PC-3 (cell line): ENCODE measurements at regions of chr14 and their contacts with region 1.

Region 1: GRCh38 chr14:59126710-59127432 is 61.6 kb upstream of the DAAM1 start:
- DNase-seq: peak; percentile 95
- ATAC-seq: peak; percentile 94
- H3K4me3 ChIP-seq: no peak overlapping the region
- H3K27ac ChIP-seq: no peak overlapping the region
- H3K4me1 ChIP-seq: no peaks in the 10 kb centered on the region
- H3K27me3 ChIP-seq: peaks cover 4% of the 10 kb centered on the region; the same call in 1 of the 2 replicates
- CTCF ChIP-seq: peak; percentile 100

Region 2: GRCh38 chr14:58540749-58541632 is 585.9 kb before region 1 on chr14:
- CTCF ChIA-PET with region 1: no interaction called
- POLR2A ChIA-PET with region 1: no interaction called
- intact Hi-C with region 1: no loop called
- DNase-seq: peak; percentile 51
- ATAC-seq: peak; percentile 64
- H3K4me3 ChIP-seq: no peak overlapping the region
- H3K27ac ChIP-seq: peak overlapping the region; percentile 42
- H3K4me1 ChIP-seq: peaks cover 30% of the 10 kb centered on the region
- H3K27me3 ChIP-seq: no peaks in the 10 kb centered on the region
- CTCF ChIP-seq: no peak

Region 3: DNA sequence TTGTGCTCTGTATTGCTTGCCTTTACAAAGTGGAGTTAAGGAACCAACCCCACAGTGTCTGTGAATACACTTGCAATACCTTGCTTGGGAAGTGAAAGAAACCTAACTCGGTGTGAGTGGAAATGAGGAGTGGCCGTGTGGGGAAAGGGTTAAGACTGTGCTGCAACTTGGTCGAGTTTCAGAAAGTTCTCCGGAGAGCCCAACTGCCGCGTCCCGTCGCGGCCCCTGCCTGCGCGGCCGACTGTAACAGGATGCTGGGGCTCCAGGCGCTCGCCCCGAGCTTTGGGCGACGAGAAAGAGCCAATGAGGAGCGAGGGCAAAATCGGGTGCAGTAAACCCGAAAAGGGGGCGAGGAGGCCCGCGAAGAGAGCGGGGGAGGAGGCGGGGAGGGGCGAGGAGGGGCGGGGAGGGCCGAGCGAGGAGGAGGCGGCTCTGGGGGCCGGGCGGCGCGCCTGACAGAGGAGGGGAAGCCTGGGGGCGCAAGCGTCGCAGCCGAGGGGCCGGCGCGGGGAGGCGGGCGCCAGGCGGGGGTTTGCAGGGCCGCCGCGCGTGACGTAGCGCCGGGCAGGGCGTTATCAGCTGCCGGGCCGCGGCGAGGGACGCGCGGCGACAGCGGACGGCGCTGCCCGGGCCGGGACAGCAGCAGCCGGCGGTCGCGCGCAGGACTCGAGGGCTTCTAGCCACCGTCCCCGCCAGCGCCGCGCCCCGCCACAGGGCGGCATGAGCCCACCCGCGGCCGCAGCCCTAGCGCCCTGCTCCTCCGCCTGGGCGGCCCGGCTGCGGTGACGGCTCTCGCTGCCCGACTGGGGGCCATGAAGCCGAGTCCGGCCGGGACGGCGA is 489.3 kb before region 1 on chr14 and contains the start of gene DACT1:
- CTCF ChIA-PET with region 1: no interaction called
- POLR2A ChIA-PET with region 1: no interaction called
- intact Hi-C with region 1: loop called (anchors 1 kb)
- DNase-seq: peak; percentile 39
- ATAC-seq: peak; percentile 49
- H3K4me3 ChIP-seq: peak within 1 kb of the TSS; percentile 63
- H3K27ac ChIP-seq: no peak within 1 kb of the TSS
- H3K4me1 ChIP-seq: peaks cover 16% of the 10 kb centered on the region
- H3K27me3 ChIP-seq: peaks cover 62% of the 10 kb centered on the region
- CTCF ChIP-seq: no peak
- total RNA-seq, gene DACT1: 0.40 and 1.8 TPM in 2 replicates

Region 4: DNA sequence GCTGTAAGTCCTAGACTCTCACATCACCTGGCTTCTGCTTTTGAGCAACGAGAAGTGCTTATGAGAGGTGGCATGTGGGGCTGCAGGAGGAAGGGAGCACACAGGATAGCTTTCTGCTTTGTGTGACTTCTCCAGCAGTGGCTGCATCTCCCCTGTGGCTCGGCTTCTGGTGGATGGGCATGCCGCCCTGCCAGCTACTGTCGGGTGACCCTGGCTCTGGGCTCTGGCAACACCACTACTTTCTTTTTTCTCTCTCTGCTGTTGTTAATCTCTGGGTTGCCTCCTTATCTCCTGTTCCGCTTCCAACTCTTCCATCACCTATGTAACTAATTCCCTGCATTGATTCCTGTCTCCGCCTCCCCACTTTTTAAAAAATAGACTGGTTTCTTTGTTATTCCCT is 147.5 kb before region 1 on chr14:
- CTCF ChIA-PET with region 1: no interaction called
- POLR2A ChIA-PET with region 1: no interaction called
- intact Hi-C with region 1: no loop called
- DNase-seq: no peak
- ATAC-seq: no peak
- H3K4me3 ChIP-seq: no peak overlapping the region
- H3K27ac ChIP-seq: no peak overlapping the region
- H3K4me1 ChIP-seq: peaks cover 12% of the 10 kb centered on the region
- H3K27me3 ChIP-seq: peaks cover 73% of the 10 kb centered on the region
- CTCF ChIP-seq: no peak

Region 5: GRCh38 chr14:59055439-59056045 is 71.3 kb before region 1 on chr14:
- CTCF ChIA-PET with region 1: no interaction called
- POLR2A ChIA-PET with region 1: no interaction called
- intact Hi-C with region 1: loop called (anchors 1 kb)
- DNase-seq: peak; percentile 92
- ATAC-seq: peak; percentile 99
- H3K4me3 ChIP-seq: no peak overlapping the region
- H3K27ac ChIP-seq: no peak overlapping the region
- H3K4me1 ChIP-seq: no peaks in the 10 kb centered on the region
- H3K27me3 ChIP-seq: peaks cover 20% of the 10 kb centered on the region
- CTCF ChIP-seq: peak; percentile 100

Region 6: GRCh38 chr14:59262717-59263454 is 136.0 kb after region 1 on chr14:
- CTCF ChIA-PET with region 1: no interaction called
- POLR2A ChIA-PET with region 1: no interaction called
- intact Hi-C with region 1: loop called (anchors 5 kb)
- DNase-seq: peak; percentile 77
- ATAC-seq: peak; percentile 99
- H3K4me3 ChIP-seq: no peak overlapping the region
- H3K27ac ChIP-seq: no peak overlapping the region
- H3K4me1 ChIP-seq: peaks cover 23% of the 10 kb centered on the region
- H3K27me3 ChIP-seq: no peaks in the 10 kb centered on the region
- CTCF ChIP-seq: peak; percentile 84

Region 7: GRCh38 chr14:59422069-59422881 is 295.4 kb after region 1 on chr14:
- CTCF ChIA-PET with region 1: interaction called, 3 read pairs
- POLR2A ChIA-PET with region 1: no interaction called
- intact Hi-C with region 1: loop called (anchors 1 kb)
- DNase-seq: peak; percentile 62
- ATAC-seq: peak; percentile 39; the same call in 1 of the 2 replicates
- H3K4me3 ChIP-seq: no peak overlapping the region
- H3K27ac ChIP-seq: no peak overlapping the region
- H3K4me1 ChIP-seq: no peaks in the 10 kb centered on the region
- H3K27me3 ChIP-seq: no peaks in the 10 kb centered on the region
- CTCF ChIP-seq: peak; percentile 97

Region 8: DNA sequence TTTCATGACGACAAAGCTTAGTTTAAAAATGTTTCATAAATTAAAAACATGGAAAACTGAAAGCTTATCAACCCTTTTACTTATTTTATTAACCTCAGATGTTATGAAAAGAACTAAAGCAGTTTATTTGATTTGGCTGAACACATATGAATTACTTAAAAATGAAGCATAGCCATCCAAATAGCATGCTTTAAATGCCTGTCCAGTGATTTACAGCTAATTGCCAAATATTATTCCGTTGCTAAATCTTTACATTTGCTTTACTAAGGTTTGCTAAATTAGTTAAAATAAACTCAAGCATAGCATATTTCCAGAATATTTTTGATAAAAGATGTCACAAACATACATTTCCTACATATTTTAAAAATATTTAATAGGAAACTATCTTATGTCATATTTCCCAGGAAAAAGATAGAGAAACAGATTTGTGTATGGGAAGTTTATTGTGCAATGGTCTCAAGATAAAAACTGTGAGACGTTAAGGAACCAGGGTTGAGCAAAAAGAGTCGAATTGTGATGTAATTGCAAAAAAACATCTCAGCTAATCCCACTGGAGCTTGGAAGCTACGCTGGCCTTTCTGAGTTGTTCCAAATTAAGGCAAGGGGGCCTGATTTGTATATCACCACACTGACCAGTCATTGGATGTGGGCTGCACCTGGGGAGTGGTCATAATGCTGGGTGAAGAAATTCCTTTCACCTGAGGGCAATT is 312.5 kb after region 1 on chr14:
- CTCF ChIA-PET with region 1: interaction called, 4 read pairs
- POLR2A ChIA-PET with region 1: no interaction called
- intact Hi-C with region 1: loop called (anchors 1 kb)
- DNase-seq: no peak
- ATAC-seq: no peak
- H3K4me3 ChIP-seq: no peak overlapping the region
- H3K27ac ChIP-seq: no peak overlapping the region
- H3K4me1 ChIP-seq: peaks cover 13% of the 10 kb centered on the region
- H3K27me3 ChIP-seq: no peaks in the 10 kb centered on the region
- CTCF ChIP-seq: no peak

Region 9: DNA sequence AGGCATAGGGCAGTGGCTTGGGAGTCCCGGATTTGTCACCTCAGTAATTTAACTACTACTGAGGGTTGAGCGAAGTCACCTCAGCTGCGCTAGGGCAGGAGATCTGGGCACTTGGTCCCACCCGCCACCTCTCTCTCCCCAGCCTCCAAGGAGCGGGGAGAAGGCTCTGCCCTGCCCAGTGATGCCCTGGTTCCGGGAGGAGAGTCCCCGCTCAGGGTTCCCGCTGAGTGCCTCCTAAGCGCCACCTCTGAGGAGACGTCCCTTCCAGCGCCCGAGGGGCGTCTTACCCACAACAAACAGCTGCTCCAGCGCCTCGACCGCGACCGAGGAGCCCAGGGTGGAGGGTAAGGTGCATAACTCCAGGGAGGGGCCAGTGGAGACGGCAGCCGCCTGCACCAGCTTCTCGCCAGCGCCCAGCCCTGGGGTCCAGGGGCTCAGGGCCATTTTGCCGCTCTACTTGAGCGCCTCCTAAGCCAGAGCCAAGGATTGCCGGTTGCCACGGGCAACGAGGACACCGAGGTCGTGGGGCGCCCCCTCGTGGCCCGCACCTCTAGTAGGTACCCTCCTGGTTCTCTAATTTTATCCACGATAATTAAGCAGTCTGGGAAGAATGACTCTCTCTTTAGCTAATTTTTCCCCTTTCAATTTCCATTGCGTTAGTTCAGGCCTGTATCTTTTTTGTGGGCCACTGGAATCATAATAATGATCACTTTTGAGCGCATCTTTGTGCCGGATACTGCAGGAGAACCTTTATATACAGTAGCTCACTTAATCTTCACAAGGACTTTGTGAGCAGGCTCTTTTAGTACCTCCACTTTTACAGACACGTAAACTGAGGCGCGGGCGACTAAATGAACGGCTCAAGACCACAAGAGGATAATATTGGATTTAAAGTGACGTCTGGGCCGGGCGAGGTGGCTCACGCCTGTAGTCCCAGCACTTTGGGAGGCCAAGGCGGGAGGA is 449.7 kb after region 1 on chr14 and contains the start of gene CCDC175:
- CTCF ChIA-PET with region 1: no interaction called
- POLR2A ChIA-PET with region 1: no interaction called
- intact Hi-C with region 1: loop called (anchors 5 kb)
- DNase-seq: peak; percentile 98
- ATAC-seq: peak; percentile 97
- H3K4me3 ChIP-seq: peak within 1 kb of the TSS; percentile 62
- H3K27ac ChIP-seq: no peak within 1 kb of the TSS
- H3K4me1 ChIP-seq: peaks cover 6% of the 10 kb centered on the region
- H3K27me3 ChIP-seq: peaks cover 63% of the 10 kb centered on the region
- CTCF ChIP-seq: peak; percentile 100
- total RNA-seq, gene CCDC175: not detected in 2 replicates